Activated T-helper 1 cell treated with anti-CD3 and anti-CD28 coated beads, Interleukin-12 subunit alpha, Interleukin-12 subunit beta, Interleukin-2, Interleukin-4 antibody, amounts not matched to agents 30 ng/mL and 10 ng/mL and 1 ng/mL, durations not matched to agents 14 hours and 24 hours and 36 hours (primary cell): ENCODE measurements at regions of chr6 and their contacts with region 1.

Region 1: DNA sequence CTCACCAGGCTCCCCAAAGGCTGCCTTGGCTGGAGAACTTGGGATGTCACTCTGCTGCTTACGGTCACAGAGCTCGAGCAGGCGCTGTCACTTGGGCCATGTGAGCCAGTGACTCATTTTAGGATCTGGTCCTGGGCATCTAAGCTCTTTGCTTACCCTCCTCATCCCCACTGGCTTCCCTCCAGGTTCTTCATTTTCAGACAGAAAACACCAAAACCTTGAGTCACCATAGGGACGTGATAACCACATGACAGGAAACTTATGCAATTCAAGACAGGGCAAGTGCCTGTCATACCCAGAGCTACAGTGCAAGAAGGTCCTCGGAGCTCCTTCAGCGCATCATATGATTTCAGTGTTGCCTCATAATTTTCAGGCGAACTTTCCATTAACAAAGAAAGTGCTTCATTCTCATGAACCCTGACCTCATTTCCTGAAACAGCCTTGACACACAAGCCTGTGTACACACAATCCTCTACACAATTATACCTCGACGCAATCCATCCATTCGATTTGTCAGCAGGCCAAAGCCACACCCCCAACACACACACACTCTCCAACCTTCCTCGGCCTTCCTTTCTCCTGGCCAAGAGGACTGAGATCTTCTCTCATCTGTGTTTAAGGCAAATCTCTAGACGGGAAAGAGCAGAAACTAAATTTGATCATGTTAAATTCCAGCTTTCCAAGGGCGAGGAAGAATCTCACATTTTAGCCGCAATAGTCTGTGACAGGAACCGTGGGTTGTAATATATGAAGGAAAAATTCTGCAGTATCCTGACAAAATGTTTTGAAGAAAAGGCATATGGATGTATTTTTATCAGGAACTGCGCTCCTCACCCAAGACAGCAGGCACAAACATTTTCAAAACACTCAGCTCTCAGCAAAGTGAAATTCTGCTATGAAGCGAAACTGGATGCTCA is 25.3 kb downstream of the TBC1D7 start:
- DNase-seq: peak; percentile 65
- H3K4me3 Mint-ChIP-seq: peak overlapping the region; percentile 61
- H3K27ac Mint-ChIP-seq: peak overlapping the region; percentile 87
- H3K4me1 Mint-ChIP-seq: peaks cover 43% of the 10 kb centered on the region
- H3K27me3 Mint-ChIP-seq: no peaks in the 10 kb centered on the region

Region 2: GRCh38 chr6:11537229-11538051 is 1765.6 kb before region 1 on chr6 and contains the start of gene TMEM170B:
- intact Hi-C with region 1: loop called (anchors 2 kb)
- DNase-seq: peak; percentile 90
- H3K4me3 Mint-ChIP-seq: peak within 1 kb of the TSS; percentile 84
- H3K27ac Mint-ChIP-seq: peak within 1 kb of the TSS; percentile 68
- H3K4me1 Mint-ChIP-seq: peaks cover 17% of the 10 kb centered on the region
- H3K27me3 Mint-ChIP-seq: peaks cover 62% of the 10 kb centered on the region
- total RNA-seq, gene TMEM170B: 0.78 and 0.86 TPM in 2 replicates